Natural killer cell (primary cell): ENCODE measurements at regions of chr10 and their contacts with region 1.

Region 1: GRCh38 chr10:91829268-91829667 is 31.0 kb downstream of the TNKS2 start:
- DNase-seq: no peak
- ATAC-seq: no peak
- H3K4me3 ChIP-seq: no peak overlapping the region
- H3K4me3 Mint-ChIP-seq: no peak overlapping the region
- H3K27ac ChIP-seq: no peak overlapping the region
- H3K27ac Mint-ChIP-seq: no peak overlapping the region
- H3K4me1 ChIP-seq: no peaks in the 10 kb centered on the region
- H3K4me1 Mint-ChIP-seq: no peaks in the 10 kb centered on the region
- H3K27me3 ChIP-seq: no peaks in the 10 kb centered on the region
- H3K27me3 Mint-ChIP-seq: no peaks in the 10 kb centered on the region
- CTCF ChIP-seq: no peak

Region 2: DNA sequence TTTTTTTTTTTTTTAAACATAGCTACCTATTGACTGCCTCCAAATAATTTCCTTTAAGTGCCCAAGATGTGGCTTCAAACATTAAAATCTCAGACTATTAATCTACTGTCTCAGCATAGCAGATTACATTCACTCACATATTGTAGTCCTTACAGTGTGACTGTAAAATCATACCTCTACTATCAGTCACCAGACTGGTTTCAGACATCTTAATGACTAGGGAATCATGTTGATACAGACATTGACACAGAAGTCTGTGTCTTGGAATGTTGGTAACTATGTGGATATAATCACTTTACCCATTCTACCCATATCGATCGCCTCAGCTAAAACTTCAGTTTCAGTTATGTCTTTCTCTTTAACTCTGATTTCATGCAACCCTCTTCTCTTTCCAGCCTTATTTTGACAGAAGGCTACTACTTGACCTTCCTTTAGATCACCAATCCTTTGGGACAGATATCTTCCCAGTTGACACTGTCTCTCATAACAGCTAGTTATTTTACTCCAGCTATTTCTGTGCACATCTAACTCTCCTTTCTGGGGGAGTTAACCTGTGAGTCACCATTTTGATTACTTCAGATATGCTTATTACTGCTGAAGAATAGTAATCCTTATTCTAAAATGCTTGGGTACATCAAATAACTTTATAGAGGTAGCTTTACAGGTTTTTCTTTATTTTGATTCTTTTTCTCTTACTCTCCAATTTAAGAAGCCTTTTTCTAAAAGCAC is 24.0 kb before region 1 on chr10:
- intact Hi-C with region 1: loop called (anchors 2 kb)
- DNase-seq: no peak
- ATAC-seq: no peak
- H3K4me3 ChIP-seq: no peak overlapping the region
- H3K4me3 Mint-ChIP-seq: no peak overlapping the region
- H3K27ac ChIP-seq: no peak overlapping the region
- H3K27ac Mint-ChIP-seq: peak overlapping the region; percentile 30 to 76
- H3K4me1 ChIP-seq: peaks cover 9% of the 10 kb centered on the region
- H3K4me1 Mint-ChIP-seq: peaks cover 66 to 69% of the 10 kb centered on the region in 2 donors
- H3K27me3 ChIP-seq: no peaks in the 10 kb centered on the region
- H3K27me3 Mint-ChIP-seq: no peaks in the 10 kb centered on the region
- CTCF ChIP-seq: no peak

Region 3: DNA sequence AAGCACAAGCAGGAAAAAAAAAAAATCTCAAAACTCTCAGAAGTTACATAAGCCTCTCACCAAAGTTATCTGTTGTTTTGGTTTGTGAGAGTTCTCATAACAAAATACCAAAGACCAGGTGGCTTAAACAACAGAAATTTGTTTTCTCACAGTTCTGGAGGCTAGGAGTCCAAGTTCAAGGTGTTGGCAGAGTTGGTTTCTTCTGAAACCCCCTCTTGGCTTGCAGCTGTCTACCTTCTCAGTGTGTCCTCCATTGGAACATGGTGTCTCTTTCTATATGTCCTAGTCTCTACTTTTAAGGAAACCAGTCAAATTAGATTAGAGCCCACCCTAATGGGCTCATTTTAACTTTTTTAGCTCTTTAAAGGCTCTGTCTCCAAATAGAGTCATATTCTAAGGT is 13.8 kb after region 1 on chr10:
- intact Hi-C with region 1: no loop called
- DNase-seq: no peak
- ATAC-seq: no peak
- H3K4me3 ChIP-seq: no peak overlapping the region
- H3K4me3 Mint-ChIP-seq: no peak overlapping the region
- H3K27ac ChIP-seq: no peak overlapping the region
- H3K27ac Mint-ChIP-seq: no peak overlapping the region
- H3K4me1 ChIP-seq: no peaks in the 10 kb centered on the region
- H3K4me1 Mint-ChIP-seq: no peaks in the 10 kb centered on the region
- H3K27me3 ChIP-seq: no peaks in the 10 kb centered on the region
- H3K27me3 Mint-ChIP-seq: no peaks in the 10 kb centered on the region
- CTCF ChIP-seq: no peak

Region 4: DNA sequence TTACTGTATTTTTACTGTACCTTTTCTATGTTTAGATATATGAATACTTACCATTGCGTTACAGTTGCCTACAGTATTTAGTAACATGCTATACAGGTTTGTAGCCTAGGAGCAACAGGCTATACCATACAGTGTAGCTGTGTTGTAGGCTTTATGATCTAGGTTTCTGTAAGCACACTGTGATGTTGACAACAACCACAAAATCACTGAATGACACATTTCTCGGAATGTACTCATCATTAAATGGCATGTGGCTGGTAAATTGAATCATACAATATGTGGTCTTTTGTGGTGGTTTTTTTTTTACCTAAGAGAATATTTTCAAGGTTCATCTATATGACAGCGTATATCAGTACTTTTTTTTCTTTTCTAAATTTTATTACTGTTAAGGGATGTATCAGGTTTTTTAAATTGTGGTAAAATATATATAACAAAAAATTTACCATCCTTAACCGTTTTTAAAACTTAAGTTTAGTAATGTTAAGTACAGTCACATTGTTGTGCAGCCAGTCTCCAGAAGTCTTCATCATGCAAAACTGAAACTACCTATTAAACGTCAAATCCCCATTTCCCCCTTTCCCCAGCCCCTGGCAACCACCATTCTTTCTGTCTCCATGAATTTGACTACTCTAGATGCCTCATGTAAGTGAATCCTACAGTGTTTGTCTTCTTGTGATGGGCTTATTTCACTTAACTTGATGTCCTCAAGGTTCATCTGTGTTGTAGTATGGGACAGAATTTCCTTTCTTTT is 115.8 kb after region 1 on chr10:
- intact Hi-C with region 1: no loop called
- DNase-seq: no peak
- ATAC-seq: peak in 2 of 3 donors; percentile 53 to 70
- H3K4me3 ChIP-seq: no peak overlapping the region
- H3K4me3 Mint-ChIP-seq: no peak overlapping the region
- H3K27ac ChIP-seq: no peak overlapping the region
- H3K27ac Mint-ChIP-seq: no peak overlapping the region
- H3K4me1 ChIP-seq: no peaks in the 10 kb centered on the region
- H3K4me1 Mint-ChIP-seq: peaks cover 12 to 16% of the 10 kb centered on the region in 2 donors
- H3K27me3 ChIP-seq: no peaks in the 10 kb centered on the region
- H3K27me3 Mint-ChIP-seq: no peaks in the 10 kb centered on the region
- CTCF ChIP-seq: no peak